ENCODE measurements at regions of chr2 and their contacts with region 1.

Region 1: GRCh38 chr2:3575534-3576262 is 638 bp downstream of the RPS7 start:
- DNase-seq: no peak
- ATAC-seq: peak; percentile 50
- H3K4me3 ChIP-seq: peak overlapping the region; percentile 73 to 99
- H3K27ac ChIP-seq: peak overlapping the region; percentile 93
- H3K4me1 ChIP-seq: peaks cover 35% of the 10 kb centered on the region
- H3K27me3 ChIP-seq: no peaks in the 10 kb centered on the region
- CTCF ChIP-seq: no peak

Region 2: GRCh38 chr2:3387644-3388411 is 187.9 kb before region 1 on chr2:
- CTCF ChIA-PET with region 1: no interaction called
- POLR2A ChIA-PET with region 1: no interaction called
- in situ Hi-C with region 1: no loop called
- intact Hi-C with region 1: no loop called
- DNase-seq: no peak
- ATAC-seq: no peak
- H3K4me3 ChIP-seq: no peak overlapping the region
- H3K27ac ChIP-seq: no peak overlapping the region
- H3K4me1 ChIP-seq: no peaks in the 10 kb centered on the region
- H3K27me3 ChIP-seq: no peaks in the 10 kb centered on the region
- CTCF ChIP-seq: no peak

Region 3: GRCh38 chr2:3624059-3624794 is 48.5 kb after region 1 on chr2:
- CTCF ChIA-PET with region 1: no interaction called
- POLR2A ChIA-PET with region 1: no interaction called
- in situ Hi-C with region 1: no loop called
- intact Hi-C with region 1: no loop called
- DNase-seq: no peak
- ATAC-seq: no peak
- H3K4me3 ChIP-seq: no peak overlapping the region
- H3K27ac ChIP-seq: no peak overlapping the region
- H3K4me1 ChIP-seq: no peaks in the 10 kb centered on the region
- H3K27me3 ChIP-seq: no peaks in the 10 kb centered on the region
- CTCF ChIP-seq: no peak

Region 4: DNA sequence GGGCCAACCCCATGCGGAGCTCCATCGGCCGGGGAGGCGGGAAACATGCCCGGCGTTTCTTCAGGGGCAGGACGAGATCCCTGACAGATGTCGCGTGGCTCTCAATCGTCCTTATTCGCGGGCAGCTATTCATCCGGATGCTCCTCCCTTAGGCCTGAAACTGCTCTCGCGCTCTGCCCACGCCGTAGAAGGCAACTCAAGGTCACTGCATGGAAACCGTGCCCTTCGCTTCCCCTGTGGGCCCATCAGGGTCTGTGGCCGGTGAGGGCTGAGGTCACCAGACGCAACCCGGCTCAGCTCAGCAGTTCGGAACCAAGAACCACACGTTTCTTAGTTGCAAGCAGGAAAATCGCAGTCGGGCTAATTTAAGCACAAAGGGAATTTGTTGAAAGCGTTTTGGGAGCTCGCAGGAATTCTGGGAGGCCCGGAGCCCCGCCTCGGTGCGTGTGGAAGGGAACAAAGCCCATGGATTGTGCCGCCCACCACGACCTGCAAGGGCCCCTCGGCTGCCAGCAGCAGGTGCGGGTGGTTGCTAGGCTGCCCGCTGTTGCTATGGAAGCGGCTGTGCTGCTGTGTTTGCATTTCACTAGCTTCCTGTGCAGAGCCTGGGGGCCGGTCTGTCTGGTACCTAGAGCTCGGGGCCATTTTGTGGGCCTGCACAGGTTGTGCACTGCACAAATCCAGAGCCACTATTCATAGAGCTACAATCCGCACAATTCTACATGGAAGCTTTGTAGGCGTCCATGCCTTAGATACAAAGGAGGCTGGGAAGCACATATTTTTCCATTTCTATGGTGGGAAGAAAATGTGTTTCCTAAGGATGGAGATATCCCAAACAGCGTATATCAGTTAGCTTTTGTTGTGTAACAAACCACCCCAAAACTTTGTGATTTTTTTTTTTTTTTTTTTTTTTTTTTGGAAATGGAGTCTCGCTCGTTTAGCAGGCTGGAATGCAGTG is 76.3 kb after region 1 on chr2:
- CTCF ChIA-PET with region 1: no interaction called
- POLR2A ChIA-PET with region 1: no interaction called
- in situ Hi-C with region 1: no loop called
- intact Hi-C with region 1: loop called (anchors 5 kb)
- DNase-seq: no peak
- ATAC-seq: no peak
- H3K4me3 ChIP-seq: no peak overlapping the region
- H3K27ac ChIP-seq: no peak overlapping the region
- H3K4me1 ChIP-seq: peaks cover 4% of the 10 kb centered on the region
- H3K27me3 ChIP-seq: no peaks in the 10 kb centered on the region
- CTCF ChIP-seq: no peak